ENCODE measurements at regions of chr3 and their contacts with region 1.

Region 1: DNA sequence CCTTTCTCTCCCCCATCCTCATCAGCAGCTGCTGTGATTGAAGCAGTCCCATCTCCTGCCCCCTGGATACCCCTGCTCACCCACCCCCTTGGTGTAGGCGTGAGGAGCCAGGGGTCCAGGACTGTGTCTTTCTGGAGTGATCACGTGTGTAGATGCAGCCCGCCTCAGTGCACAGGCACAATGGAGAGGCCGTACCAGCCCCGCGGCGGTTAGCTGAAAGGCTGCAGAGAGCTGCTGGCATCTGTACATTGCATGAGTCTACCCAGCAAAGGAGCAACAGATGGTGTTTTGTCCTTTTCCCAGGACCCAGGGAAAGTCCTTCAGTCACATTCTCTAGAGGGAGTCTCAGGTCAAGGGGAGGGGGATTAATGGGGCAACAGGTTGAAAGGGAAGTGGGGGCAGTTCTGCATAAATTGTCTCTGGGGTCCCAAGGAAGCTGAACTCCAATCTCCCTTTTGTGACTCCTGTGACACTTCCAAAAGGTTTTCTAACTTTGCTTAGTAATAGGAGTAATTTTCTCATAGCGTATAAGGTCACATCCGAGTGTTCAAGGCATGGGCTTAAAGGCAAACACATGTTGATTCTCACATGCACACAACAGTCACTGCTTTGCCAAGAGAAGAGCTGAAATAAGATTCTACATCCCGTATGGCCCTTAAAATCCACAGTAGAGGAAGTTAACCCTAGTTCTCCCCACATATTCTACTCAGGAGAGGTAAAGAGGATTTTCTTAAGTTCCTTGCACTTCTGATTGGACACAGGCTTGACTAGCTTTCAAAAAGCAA is 7.1 kb downstream of the CSPG5 start:
- DNase-seq: peak in 9 of 10 donors; percentile 43 to 72 (median 56)
- H3K4me3 ChIP-seq: peak overlapping the region in 9 of 59 donors; percentile 2 to 47 (median 9)
- H3K27ac ChIP-seq: peak overlapping the region in 47 of 59 donors; percentile 3 to 91 (median 74)
- H3K27me3 ChIP-seq: no peaks in the 10 kb centered on the region
- CTCF ChIP-seq: no peak

Region 2: DNA sequence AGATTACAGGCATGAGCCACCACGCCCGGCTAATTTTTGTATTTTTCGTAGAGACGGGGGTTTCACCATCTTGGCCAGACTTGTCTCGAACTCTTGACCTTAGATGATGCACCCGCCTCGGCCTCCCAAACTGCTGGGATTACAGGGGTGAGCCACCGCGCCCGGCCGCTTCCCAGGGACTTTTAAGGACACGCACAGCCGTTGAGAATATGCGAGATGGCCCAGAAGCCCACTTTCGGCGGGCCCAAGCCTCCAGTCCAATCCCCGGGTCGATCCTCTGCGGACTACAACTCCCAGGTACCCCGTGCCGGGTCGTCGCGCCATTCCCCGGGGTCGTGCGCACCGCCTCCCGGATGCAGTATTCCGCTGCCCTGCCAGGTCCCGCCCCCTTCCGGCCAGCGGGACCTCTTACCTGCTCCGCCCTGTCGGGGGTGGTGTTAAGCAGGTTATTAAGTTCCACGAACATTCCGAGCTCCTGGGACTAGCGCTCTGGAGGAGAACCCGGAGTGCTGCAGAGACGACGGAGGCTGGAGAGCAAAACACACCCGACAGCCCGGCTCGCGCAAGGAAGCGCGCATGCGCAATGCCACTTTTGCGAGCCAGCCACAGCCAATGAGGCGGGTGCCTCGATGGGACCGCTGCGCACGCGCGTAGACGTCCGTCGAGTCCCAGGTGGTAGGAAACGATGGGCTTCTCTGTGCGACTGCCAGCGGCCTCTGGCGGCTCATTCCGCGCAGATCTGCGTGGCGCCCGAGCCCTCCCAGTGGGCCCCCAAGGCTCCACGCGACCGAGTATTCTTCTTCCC is 58.3 kb before region 1 on chr3 and contains the start of gene ELP6:
- intact Hi-C with region 1: no loop called
- DNase-seq: peak; percentile 93 to 97 (median 95)
- H3K4me3 ChIP-seq: peak within 1 kb of the TSS; percentile 54 to 99 (median 88)
- H3K27ac ChIP-seq: peak within 1 kb of the TSS; percentile 88 to 100 (median 99)
- H3K27me3 ChIP-seq: no peaks in the 10 kb centered on the region
- CTCF ChIP-seq: peak in 55 of 56 donors; percentile 21 to 80 (median 63)
- total RNA-seq, gene ELP6: 22.2 to 44.0 (median 33.7) TPM

Region 3: GRCh38 chr3:47527952-47528718 is 43.4 kb before region 1 on chr3:
- intact Hi-C with region 1: loop called in 1 of 2 experiments (anchors 5 kb)
- DNase-seq: no peak
- H3K4me3 ChIP-seq: no peak overlapping the region
- H3K27ac ChIP-seq: no peak overlapping the region
- H3K27me3 ChIP-seq: no peaks in the 10 kb centered on the region
- CTCF ChIP-seq: no peak

Region 4: DNA sequence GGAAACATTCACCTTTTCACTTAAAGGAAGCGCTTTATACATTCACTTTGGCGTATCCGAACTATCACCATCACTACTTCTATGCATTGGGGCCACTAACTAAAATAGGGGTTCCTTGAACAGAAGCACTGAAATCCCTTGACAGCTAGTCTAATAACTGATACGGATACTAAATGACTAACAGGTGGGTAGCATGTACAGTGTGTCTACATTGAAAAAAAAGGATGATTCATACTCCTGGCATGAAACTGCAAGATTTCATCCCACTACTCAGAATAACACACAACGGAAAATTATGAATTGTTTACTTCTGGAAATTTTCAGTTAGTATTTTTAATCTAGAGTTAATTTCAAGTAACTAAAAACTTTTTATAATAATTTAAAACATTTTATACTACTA is 113.5 kb after region 1 on chr3:
- intact Hi-C with region 1: no loop called
- DNase-seq: no peak
- H3K4me3 ChIP-seq: no peak overlapping the region
- H3K27ac ChIP-seq: no peak overlapping the region
- H3K27me3 ChIP-seq: no peaks in the 10 kb centered on the region
- CTCF ChIP-seq: no peak

Region 5: GRCh38 chr3:47705391-47705790 is 133.8 kb after region 1 on chr3:
- intact Hi-C with region 1: no loop called
- DNase-seq: no peak
- H3K4me3 ChIP-seq: no peak overlapping the region
- H3K27ac ChIP-seq: no peak overlapping the region
- H3K27me3 ChIP-seq: no peaks in the 10 kb centered on the region
- CTCF ChIP-seq: no peak

Region 6: GRCh38 chr3:47910777-47911440 is 339.3 kb after region 1 on chr3:
- intact Hi-C with region 1: no loop called
- DNase-seq: peak in 4 of 10 donors; percentile 38 to 68 (median 54)
- H3K4me3 ChIP-seq: no peak overlapping the region
- H3K27ac ChIP-seq: peak overlapping the region in 31 of 59 donors; percentile 4 to 75 (median 48)
- H3K27me3 ChIP-seq: no peaks in the 10 kb centered on the region
- CTCF ChIP-seq: no peak

Measured in dorsolateral prefrontal cortex (tissue), 120 donors.